ENCODE measurements at regions of chr6 and their contacts with region 1.

Region 1: DNA sequence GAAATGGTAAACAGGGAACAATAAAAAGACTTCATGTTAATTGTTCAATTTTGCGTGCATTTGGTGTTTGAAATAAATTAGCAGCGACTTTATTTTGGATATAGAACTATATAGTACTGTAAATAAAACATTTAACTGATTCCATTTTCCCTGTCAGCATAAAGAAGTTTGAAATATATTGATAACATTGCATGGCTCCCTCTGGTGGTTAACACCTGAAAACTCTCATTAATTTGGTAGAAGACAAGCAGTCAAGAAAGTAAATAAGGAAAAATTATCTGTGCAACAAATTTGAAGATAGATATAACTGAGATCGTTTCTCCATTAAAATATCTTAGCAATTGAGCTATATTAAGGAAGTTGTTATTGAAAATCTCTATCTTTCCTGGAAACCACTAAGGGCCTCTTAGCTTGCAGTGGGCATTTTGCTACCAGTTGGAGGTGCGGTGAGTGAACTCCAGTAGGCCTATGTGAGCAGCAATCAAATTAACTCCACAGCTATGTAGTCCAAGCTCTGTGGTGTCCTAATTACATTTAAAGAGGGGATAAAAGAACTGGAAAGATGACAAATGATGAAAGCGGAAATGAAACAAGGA is 435.7 kb upstream of the FKBP1C start:
- DNase-seq: no peak
- ATAC-seq: peak; percentile 67
- H3K4me3 ChIP-seq: no peak overlapping the region
- H3K27ac ChIP-seq: no peak overlapping the region
- H3K4me1 ChIP-seq: no peaks in the 10 kb centered on the region
- H3K27me3 ChIP-seq: no peaks in the 10 kb centered on the region
- CTCF ChIP-seq: peak; percentile 29 to 55 (median 43); a peak in 4 of 6 replicates
- EP300 ChIP-seq: no peak
- POLR2A ChIP-seq: no peak
- RAD21 ChIP-seq: peak; percentile 44; the same call in 1 of the 2 replicates

Region 2: DNA sequence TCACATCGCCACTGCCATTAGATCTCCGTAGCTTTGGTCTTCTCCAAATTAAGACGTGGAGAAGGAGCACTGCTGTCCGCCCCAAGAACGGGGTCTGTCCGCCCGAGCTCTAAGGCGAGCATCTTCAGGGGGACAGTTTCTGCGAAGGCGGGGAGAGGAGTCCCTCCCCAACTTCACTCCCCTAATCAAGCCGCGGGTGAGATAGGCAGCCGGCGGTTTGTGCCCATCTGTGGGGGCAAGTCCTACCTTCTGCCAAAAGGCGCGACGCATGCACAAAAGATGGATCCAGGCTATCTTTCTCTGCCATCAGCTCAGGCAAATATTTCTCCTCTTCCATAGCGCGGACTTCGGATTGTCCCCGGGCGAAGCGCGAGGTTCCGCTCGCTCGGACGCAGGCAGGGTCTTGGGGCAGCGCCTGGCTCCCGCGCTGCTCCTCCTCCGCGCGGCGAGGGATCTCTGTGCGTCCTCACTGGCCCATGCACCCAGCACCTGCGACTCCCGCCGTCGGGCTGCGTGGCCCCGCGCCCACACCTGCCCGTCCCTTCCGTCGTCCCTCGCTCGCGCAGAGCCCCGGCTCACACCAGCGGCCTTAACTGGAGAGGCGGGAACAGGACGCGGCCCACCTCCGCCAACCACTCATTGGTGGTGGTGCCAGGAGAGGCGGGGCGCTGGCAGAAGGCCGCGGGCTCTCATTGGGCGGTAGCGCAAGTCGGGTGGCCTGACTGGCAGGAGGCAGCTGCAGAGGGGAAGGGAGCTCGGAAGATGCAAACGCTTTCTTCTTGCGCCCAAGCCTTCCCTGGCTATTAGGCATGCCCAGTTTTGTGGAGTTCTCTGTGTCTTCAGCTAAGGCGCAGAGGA is 489.7 kb before region 1 on chr6 and contains the start of gene KHDRBS2:
- CTCF ChIA-PET with region 1: interaction called, 3 read pairs
- POLR2A ChIA-PET with region 1: no interaction called
- RAD21 ChIA-PET with region 1: no interaction called
- SMC1A ChIA-PET with region 1: interaction called, 3 read pairs
- in situ Hi-C with region 1: no loop called
- intact Hi-C with region 1: loop called (anchors 10 kb)
- DNase-seq: peak; percentile 31
- ATAC-seq: peak; percentile 100
- H3K4me3 ChIP-seq: peak within 1 kb of the TSS; percentile 67
- H3K27ac ChIP-seq: no peak within 1 kb of the TSS
- H3K4me1 ChIP-seq: no peaks in the 10 kb centered on the region
- H3K27me3 ChIP-seq: peaks cover 0 to 3% of the 10 kb centered on the region in 2 experiments; a peak in 1 of 4 replicates
- CTCF ChIP-seq: no peak
- EP300 ChIP-seq: no peak
- POLR2A ChIP-seq: no peak
- RAD21 ChIP-seq: no peak
- polyA plus RNA-seq, gene KHDRBS2: not detected

Region 3: DNA sequence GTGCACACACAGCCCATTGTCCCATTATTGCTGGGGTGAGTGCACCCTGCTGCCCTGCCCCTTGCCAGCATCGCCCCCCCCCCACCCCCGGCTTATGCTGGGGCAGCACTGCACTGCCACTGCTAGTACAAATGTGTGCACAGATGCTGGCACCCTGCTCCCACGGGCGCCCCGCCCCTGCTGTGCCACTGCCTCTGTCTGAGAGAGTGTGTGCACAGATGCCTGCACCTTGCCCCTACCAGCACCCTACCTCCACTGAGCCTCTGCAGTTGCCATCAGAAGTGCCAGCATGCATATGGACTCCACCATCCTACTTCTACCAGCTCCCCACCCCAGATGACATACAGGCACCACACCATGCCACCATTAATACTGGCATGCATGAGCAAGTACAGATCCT is 34.9 kb before region 1 on chr6:
- CTCF ChIA-PET with region 1: interaction called, 25 read pairs
- POLR2A ChIA-PET with region 1: no interaction called
- RAD21 ChIA-PET with region 1: interaction called, 6 read pairs
- SMC1A ChIA-PET with region 1: interaction called, 8 read pairs
- in situ Hi-C with region 1: no loop called
- intact Hi-C with region 1: no loop called
- DNase-seq: no peak
- ATAC-seq: no peak
- H3K4me3 ChIP-seq: no peak overlapping the region
- H3K27ac ChIP-seq: no peak overlapping the region
- H3K4me1 ChIP-seq: no peaks in the 10 kb centered on the region
- H3K27me3 ChIP-seq: no peaks in the 10 kb centered on the region
- CTCF ChIP-seq: no peak
- EP300 ChIP-seq: no peak
- POLR2A ChIP-seq: no peak
- RAD21 ChIP-seq: no peak

Region 4: GRCh38 chr6:62763125-62763912 is 12.2 kb before region 1 on chr6:
- CTCF ChIA-PET with region 1: interaction called, 13 read pairs
- POLR2A ChIA-PET with region 1: no interaction called
- RAD21 ChIA-PET with region 1: interaction called, 3 read pairs
- SMC1A ChIA-PET with region 1: interaction called, 18 read pairs
- in situ Hi-C with region 1: no loop called
- intact Hi-C with region 1: no loop called
- DNase-seq: no peak
- ATAC-seq: no peak
- H3K4me3 ChIP-seq: no peak overlapping the region
- H3K27ac ChIP-seq: no peak overlapping the region
- H3K4me1 ChIP-seq: no peaks in the 10 kb centered on the region
- H3K27me3 ChIP-seq: no peaks in the 10 kb centered on the region
- CTCF ChIP-seq: no peak
- EP300 ChIP-seq: no peak
- POLR2A ChIP-seq: no peak
- RAD21 ChIP-seq: no peak

Region 5: GRCh38 chr6:62805431-62805830 is 29.9 kb after region 1 on chr6:
- CTCF ChIA-PET with region 1: no interaction called
- POLR2A ChIA-PET with region 1: no interaction called
- RAD21 ChIA-PET with region 1: no interaction called
- SMC1A ChIA-PET with region 1: no interaction called
- in situ Hi-C with region 1: no loop called
- intact Hi-C with region 1: no loop called
- DNase-seq: no peak
- ATAC-seq: no peak
- H3K4me3 ChIP-seq: no peak overlapping the region
- H3K27ac ChIP-seq: no peak overlapping the region
- H3K4me1 ChIP-seq: no peaks in the 10 kb centered on the region
- H3K27me3 ChIP-seq: no peaks in the 10 kb centered on the region
- CTCF ChIP-seq: no peak
- EP300 ChIP-seq: no peak
- POLR2A ChIP-seq: no peak
- RAD21 ChIP-seq: no peak

Measured in GM12878 (cell line).